Naive thymus-derived CD4-positive, alpha-beta T cell (primary cell): ENCODE measurements at regions of chr1 and their contacts with region 1.

Region 1: DNA sequence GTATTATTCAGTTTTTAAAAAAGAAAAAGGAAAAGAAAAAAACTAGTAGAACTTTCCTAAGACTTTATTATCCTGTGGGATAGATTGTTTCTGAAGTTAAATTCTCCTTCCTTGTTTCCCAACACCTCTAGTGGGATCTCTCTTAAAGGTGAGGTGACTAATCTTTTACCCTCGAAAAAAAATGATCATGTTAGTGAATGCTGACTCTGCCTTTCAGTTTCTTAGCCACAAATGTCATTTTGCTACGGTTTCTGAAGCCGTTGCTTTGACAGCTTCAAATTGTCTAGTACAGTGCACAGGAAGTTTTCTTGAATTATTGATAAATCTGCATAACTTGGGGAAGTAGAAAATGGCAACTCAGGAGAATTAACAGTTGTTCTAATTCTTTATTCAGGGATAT is 13.0 kb upstream of the NEK7 start:
- DNase-seq: no peak
- ATAC-seq: no peak
- H3K4me3 ChIP-seq: no peak overlapping the region
- H3K4me3 Mint-ChIP-seq: no peak overlapping the region
- H3K27ac ChIP-seq: no peak overlapping the region
- H3K27ac Mint-ChIP-seq: no peak overlapping the region
- H3K4me1 ChIP-seq: no peaks in the 10 kb centered on the region
- H3K4me1 Mint-ChIP-seq: peaks cover 0 to 9% (median 4%) of the 10 kb centered on the region in 7 donors
- H3K27me3 ChIP-seq: no peaks in the 10 kb centered on the region
- H3K27me3 Mint-ChIP-seq: no peaks in the 10 kb centered on the region

Region 2: DNA sequence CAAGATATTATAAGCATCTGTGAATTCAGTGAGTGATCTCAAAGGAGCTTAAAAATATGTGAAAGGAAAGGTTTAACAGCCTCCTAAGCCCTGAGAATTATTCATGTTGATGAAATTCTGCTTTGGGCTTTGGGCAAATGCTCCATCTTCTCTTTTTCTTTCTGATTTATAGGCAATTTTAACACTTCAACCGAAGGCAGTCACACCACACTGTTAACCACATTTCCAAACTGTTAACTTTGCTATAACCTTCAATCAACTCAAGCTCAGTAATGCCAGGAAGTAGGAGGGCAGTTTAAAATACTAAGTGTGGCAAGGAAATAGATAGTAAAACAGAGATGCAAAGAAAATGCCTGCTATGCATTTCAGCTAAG is 41.4 kb before region 1 on chr1:
- CTCF ChIA-PET with region 1: no interaction called
- POLR2A ChIA-PET with region 1: no interaction called
- intact Hi-C with region 1: loop called in 1 of 2 experiments (anchors 5 kb)
- DNase-seq: peak in 4 of 9 donors; percentile 10 to 25 (median 16)
- ATAC-seq: peak; percentile 68
- H3K4me3 ChIP-seq: no peak overlapping the region
- H3K4me3 Mint-ChIP-seq: peak overlapping the region in 7 of 10 donors; percentile 16 to 49 (median 36)
- H3K27ac ChIP-seq: no peak overlapping the region
- H3K27ac Mint-ChIP-seq: peak overlapping the region in 5 of 9 donors; percentile 3 to 65 (median 24)
- H3K4me1 ChIP-seq: peaks cover 10 to 15% of the 10 kb centered on the region in 2 donors
- H3K4me1 Mint-ChIP-seq: peaks cover 12 to 27% (median 17%) of the 10 kb centered on the region in 7 donors
- H3K27me3 ChIP-seq: no peaks in the 10 kb centered on the region
- H3K27me3 Mint-ChIP-seq: no peaks in the 10 kb centered on the region